ENCODE measurements at regions of chr6 and their contacts with region 1.

Region 1: GRCh38 chr6:10510592-10511367 is 10.4 kb upstream of the GCNT2 start:
- DNase-seq: peak; percentile 43 to 78 (median 62)
- ATAC-seq: peak; percentile 98
- H3K4me3 ChIP-seq: no peak overlapping the region
- H3K27ac ChIP-seq: no peak overlapping the region
- H3K4me1 ChIP-seq: peaks cover 0 to 6% of the 10 kb centered on the region in 2 experiments; a peak in 2 of 5 replicates
- H3K27me3 ChIP-seq: peaks cover 0 to 4% of the 10 kb centered on the region in 2 experiments; a peak in 1 of 5 replicates
- CTCF ChIP-seq: peak; percentile 88 to 96 (median 95)
- EP300 ChIP-seq: 0 out of 2 replicates have a peak, but pooled peaks have one; percentile 4
- POLR2A ChIP-seq: no peak
- RAD21 ChIP-seq: peak; percentile 80 to 90

Region 2: DNA sequence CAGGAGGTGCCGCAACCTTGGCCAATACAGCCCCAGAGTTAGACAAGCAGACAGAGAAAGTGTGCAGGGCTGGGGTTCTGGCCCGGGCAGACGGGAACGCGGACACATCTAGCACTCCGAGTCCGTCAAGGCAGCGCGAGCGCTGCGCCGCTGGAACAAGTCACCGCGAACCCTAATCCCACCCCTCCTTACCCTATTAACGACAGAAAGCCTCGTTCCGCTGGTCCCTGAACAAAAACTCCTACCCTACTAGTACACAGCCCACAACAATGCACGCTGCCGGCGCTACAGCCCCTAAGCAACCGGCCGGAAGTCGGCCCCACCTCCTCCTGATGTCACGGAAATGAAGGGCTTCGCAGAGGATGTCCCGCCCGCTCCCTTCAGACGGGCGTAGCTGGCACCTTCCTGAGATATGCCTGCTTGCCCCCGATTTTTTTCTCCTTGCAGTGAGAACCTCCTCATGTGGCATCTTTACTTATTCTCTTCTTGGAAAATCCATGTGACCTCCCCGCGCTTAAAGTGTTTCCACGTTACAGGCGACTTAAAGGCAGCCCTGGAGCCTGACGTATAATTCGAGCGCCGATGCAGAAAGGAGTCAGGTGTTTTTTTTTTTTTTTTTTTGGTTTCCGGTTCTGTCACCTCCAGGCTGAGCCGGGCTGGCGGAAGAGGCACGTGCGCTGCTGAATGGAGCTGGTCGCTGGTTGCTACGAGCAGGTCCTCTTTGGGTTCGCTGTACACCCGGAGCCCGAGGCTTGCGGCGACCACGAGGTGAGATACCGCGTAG is 183.7 kb after region 1 on chr6 and contains the starts of genes C6orf52 and PAK1IP1:
- CTCF ChIA-PET with region 1: no interaction called
- POLR2A ChIA-PET with region 1: interaction called, 4 read pairs
- in situ Hi-C with region 1: no loop called
- intact Hi-C with region 1: loop called (anchors 2 kb)
- DNase-seq: peak; percentile 94 to 97 (median 94)
- ATAC-seq: peak; percentile 98
- H3K4me3 ChIP-seq: peak within 1 kb of the TSS; percentile 55
- H3K27ac ChIP-seq: peak within 1 kb of the TSS; percentile 84
- H3K4me1 ChIP-seq: peaks cover 5 to 13% of the 10 kb centered on the region in 2 experiments; a peak in 4 of 5 replicates
- H3K27me3 ChIP-seq: no peaks in the 10 kb centered on the region
- CTCF ChIP-seq: 0 out of 6 replicates have a peak, but pooled peaks of 1 of the 3 experiments have one; percentile 1
- EP300 ChIP-seq: no peak; the same call in none of the 2 replicates
- POLR2A ChIP-seq: peak; percentile 98
- RAD21 ChIP-seq: peak; percentile 34 to 38; a peak in 3 of 4 replicates
- polyA plus RNA-seq, gene C6orf52: 27.6 to 37.0 TPM
- polyA plus RNA-seq, gene PAK1IP1: 189 to 200 TPM

Region 3: GRCh38 chr6:10713962-10714361 is 203.2 kb after region 1 on chr6:
- CTCF ChIA-PET with region 1: no interaction called
- POLR2A ChIA-PET with region 1: no interaction called
- in situ Hi-C with region 1: no loop called
- intact Hi-C with region 1: loop called (anchors 5 kb)
- DNase-seq: no peak
- ATAC-seq: no peak
- H3K4me3 ChIP-seq: no peak overlapping the region
- H3K27ac ChIP-seq: no peak overlapping the region
- H3K4me1 ChIP-seq: no peaks in the 10 kb centered on the region
- H3K27me3 ChIP-seq: no peaks in the 10 kb centered on the region
- CTCF ChIP-seq: no peak
- EP300 ChIP-seq: no peak
- POLR2A ChIP-seq: no peak
- RAD21 ChIP-seq: no peak

Measured in K562 (cell line).